OCI-LY7 (cell line): ENCODE measurements at regions of chr10 and their contacts with region 1.

Region 1: DNA sequence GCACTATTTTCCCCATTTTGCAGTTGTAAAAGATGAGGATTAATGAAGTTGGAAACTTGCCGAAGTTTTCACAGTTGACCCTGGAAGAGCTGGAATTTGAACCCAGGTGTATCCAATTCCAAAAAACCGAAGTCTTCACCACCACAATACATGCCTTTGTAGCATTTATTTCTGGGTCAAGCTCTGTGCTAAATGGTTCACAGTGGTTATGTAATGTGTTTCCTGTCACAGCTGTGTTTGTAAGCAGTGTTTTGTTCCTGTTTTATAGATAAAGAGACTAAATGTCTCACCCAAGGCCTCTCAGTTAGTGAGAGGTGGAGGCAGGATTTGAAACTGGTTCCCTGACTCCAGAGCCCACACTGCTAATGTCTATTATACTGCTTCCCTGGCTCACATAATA is 17.6 kb downstream of the SFTPA2 start:
- DNase-seq: no peak
- H3K4me3 ChIP-seq: no peak overlapping the region
- H3K27ac ChIP-seq: no peak overlapping the region
- H3K4me1 ChIP-seq: no peaks in the 10 kb centered on the region
- CTCF ChIP-seq: no peak

Region 2: DNA sequence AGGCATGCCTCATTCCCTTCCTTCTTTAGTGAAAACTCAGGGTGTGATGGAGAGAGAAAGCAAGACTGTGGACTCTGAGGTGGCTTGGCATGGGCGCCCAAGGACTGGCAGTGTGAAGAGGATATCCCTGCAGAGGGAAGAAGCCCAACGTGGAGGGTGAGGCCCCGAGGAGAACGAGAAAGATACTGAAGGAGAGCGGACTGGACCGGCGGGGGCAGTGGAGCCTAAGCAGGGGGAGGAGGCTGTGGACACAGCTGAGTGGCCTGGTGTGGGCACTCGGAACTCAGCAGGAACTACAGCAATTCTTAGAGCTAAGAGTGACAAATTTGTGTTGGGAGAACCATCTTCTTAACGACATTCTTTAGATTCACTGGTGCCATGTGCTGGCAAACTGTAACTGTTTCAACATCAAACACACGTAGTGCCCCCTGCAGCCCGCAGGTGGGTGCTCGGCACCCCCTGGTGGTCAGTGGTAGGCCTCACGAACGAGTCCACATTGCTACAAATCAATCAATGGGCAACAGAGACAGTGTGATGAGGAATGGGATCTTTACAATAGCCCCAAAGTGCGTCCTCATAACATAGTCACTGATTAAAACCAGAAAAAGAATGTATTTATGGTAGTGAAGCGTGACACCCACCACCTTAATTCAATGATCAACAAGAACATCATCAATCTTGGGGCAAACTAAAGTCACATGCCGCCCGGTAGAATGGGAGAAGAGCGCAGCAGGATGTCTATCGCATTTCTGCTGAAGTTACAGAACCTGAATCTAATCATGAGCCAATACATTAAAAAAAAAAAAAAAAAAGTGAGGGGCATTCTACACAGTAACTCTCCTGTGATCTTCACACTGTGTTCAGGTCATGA is 66.1 kb after region 1 on chr10:
- CTCF ChIA-PET with region 1: no interaction called
- POLR2A ChIA-PET with region 1: no interaction called
- intact Hi-C with region 1: loop called (anchors 2 kb)
- DNase-seq: peak; percentile 79
- H3K4me3 ChIP-seq: no peak overlapping the region
- H3K27ac ChIP-seq: no peak overlapping the region
- H3K4me1 ChIP-seq: peaks cover 32% of the 10 kb centered on the region
- CTCF ChIP-seq: peak; percentile 93

Region 3: GRCh38 chr10:79929409-79929904 is 386.8 kb after region 1 on chr10:
- CTCF ChIA-PET with region 1: no interaction called
- POLR2A ChIA-PET with region 1: no interaction called
- intact Hi-C with region 1: loop called (anchors 2 kb)
- DNase-seq: peak; percentile 62
- H3K4me3 ChIP-seq: no peak overlapping the region
- H3K27ac ChIP-seq: no peak overlapping the region
- H3K4me1 ChIP-seq: no peaks in the 10 kb centered on the region
- CTCF ChIP-seq: peak; percentile 82

Region 4: GRCh38 chr10:80046629-80047441 is 504.2 kb after region 1 on chr10:
- CTCF ChIA-PET with region 1: no interaction called
- POLR2A ChIA-PET with region 1: no interaction called
- intact Hi-C with region 1: loop called (anchors 5 kb)
- DNase-seq: peak; percentile 68
- H3K4me3 ChIP-seq: no peak overlapping the region
- H3K27ac ChIP-seq: no peak overlapping the region
- H3K4me1 ChIP-seq: no peaks in the 10 kb centered on the region
- CTCF ChIP-seq: peak; percentile 97